Tibial artery (tissue), 4 donors: ENCODE measurements at regions of chr1 and their contacts with region 1.

Region 1: GRCh38 chr1:47424336-47424982 is 8.4 kb downstream of the FOXE3 start:
- DNase-seq: peak in 1 of 2 donors; percentile 45
- H3K4me3 ChIP-seq: no peak overlapping the region
- H3K27ac ChIP-seq: no peak overlapping the region
- H3K4me1 ChIP-seq: peaks cover 0 to 7% (median 0%) of the 10 kb centered on the region in 4 donors
- H3K27me3 ChIP-seq: no peaks in the 10 kb centered on the region
- CTCF ChIP-seq: peak; percentile 58 to 63

Region 2: DNA sequence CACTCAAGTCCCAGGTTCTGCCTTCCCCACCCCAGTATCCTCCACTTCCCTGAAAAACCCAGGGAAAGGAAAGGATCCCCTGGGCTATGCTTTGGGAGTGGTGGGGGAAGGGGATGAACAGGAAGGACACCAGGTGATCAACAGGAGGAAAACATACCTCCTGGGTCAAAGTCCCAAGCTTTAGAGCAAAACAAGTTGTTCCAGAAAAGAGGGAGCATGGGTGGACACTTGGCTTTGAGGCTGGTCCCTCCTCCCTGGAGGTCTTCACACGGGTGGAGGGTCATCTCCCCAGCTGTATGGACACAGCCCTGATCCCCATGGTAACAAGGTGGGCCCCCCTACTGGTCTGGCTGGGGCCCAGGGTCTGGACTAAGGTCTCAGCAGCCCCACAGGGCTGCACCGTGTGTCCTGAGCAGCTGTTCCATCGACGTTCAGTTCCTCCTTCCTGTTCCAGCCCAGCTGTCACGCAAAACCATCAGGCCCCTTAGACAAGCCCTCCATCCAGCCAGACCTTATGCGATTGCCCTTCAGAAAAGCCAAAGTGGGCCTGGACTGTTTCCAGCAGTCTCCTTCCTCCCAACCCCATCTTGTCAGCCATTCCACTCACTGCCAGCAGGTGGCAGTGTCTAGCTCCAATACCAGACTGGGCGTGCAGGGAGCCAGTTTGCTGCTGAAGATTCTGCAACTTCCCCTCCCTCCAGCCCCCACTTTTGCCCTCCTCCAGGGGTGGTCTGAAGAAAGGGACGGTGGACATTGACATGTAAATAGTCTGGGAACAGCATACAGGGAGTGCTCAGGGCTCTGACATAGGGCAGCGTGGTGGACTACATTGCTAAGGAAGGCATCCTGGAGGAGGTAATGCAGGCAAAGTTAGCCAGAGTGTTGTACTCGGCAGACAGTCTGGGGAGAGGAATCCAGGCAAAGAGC is 231.7 kb before region 1 on chr1:
- intact Hi-C with region 1: loop called (anchors 10 kb)
- DNase-seq: peak; percentile 82 to 85
- H3K4me3 ChIP-seq: no peak overlapping the region
- H3K27ac ChIP-seq: no peak overlapping the region
- H3K4me1 ChIP-seq: peaks cover 6 to 43% (median 33%) of the 10 kb centered on the region in 4 donors
- H3K27me3 ChIP-seq: peaks cover 0 to 3% of the 10 kb centered on the region in 2 donors
- CTCF ChIP-seq: peak; percentile 87 to 92